GM10248 (cell line): ENCODE measurements at regions of chr2 and their contacts with region 1.

Region 1: GRCh38 chr2:142980561-142981378 is 103.3 kb downstream of the KYNU start:
- DNase-seq: peak; percentile 17
- CTCF ChIP-seq: peak; percentile 24

Region 2: DNA sequence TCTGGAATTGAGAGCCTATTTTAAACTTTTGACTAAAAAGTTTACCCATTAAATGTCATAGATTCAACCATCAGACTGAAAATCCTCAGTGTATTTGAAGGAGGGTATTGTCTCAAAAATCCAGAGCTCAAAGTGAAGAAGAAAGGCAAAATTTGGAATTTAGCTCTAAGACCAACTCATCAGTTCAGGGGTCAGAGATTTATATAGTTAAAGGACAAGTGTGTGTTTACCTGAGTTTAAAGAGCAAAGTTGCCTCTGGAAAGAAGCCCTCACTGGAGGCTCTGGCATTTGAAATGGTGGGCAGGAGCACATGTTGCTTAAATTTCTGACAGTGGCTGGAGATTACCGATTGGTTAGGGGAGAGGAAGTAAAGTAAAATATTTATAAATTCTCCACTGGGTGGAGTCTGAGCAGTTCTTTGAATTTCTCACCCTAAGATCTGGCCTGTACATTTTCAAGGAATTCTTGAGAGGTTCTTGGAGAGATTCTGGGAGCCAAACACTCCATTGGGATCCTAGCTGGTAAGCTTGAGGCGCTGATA is 103.5 kb before region 1 on chr2 and contains the start of gene KYNU:
- CTCF ChIA-PET with region 1: interaction called, 15 read pairs
- POLR2A ChIA-PET with region 1: no interaction called
- DNase-seq: no peak
- CTCF ChIP-seq: peak; percentile 13

Region 3: GRCh38 chr2:142952793-142953494 is 27.8 kb before region 1 on chr2:
- CTCF ChIA-PET with region 1: no interaction called
- POLR2A ChIA-PET with region 1: no interaction called
- DNase-seq: no peak
- CTCF ChIP-seq: no peak

Region 4: GRCh38 chr2:142965443-142965842 is 15.3 kb before region 1 on chr2:
- CTCF ChIA-PET with region 1: interaction called, 14 read pairs
- POLR2A ChIA-PET with region 1: no interaction called
- DNase-seq: no peak
- CTCF ChIP-seq: no peak

Region 5: GRCh38 chr2:143140864-143141661 is 160.3 kb after region 1 on chr2:
- CTCF ChIA-PET with region 1: no interaction called
- POLR2A ChIA-PET with region 1: no interaction called
- DNase-seq: no peak
- CTCF ChIP-seq: no peak

Region 6: DNA sequence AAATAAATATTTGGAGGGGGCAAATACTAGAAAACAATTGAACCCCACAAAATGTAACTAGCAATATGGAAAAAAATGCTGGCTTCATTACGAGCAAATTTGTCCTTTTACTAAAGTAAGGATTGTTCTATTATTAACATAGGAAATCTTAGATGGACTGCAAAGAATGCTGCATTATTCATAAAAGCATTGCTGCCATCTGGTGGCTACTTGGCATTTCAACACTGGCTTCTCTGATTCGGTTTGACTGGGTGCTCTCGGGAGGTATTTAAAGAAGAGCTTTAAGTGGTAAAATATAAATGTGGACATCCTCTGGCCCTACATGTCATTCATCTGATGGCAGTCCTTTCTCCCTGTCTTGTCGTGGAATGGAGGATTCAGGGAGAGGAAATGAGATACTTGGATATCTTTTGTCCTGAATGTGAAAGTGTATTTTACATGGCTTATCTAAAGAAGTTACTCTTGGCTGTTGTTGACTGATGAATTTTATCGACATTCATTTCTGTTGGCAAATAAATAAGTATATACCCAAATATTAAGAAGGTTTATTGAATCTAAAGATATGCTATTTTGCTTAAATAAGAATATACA is 278.7 kb after region 1 on chr2:
- CTCF ChIA-PET with region 1: no interaction called
- POLR2A ChIA-PET with region 1: no interaction called
- DNase-seq: peak; percentile 13
- CTCF ChIP-seq: peak; percentile 67